CD4-positive, alpha-beta memory T cell (primary cell): ENCODE measurements at regions of chr11 and their contacts with region 1.

Region 1: DNA sequence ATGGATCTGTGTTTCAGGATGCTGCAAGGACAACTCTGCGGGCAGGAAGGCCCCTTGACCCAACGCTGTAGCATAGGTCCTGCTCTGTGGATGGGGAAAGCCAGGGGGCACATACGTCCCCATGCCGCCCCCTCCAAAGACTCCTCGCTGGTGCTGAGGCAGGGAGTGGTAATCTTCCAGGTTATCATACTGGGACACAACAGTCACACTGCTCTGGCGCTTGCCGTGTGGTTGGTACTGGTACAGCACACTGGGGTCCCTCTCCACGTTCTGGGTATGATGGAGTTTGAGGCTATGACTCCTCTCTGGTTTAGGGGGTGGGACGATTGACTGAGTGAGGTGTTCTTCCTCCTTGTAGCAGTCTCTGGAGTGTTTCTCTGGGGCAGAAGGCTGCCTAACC is 26.2 kb upstream of the TP53AIP1 start:
- DNase-seq: no peak
- H3K4me3 ChIP-seq: no peak overlapping the region
- H3K4me3 Mint-ChIP-seq: no peak overlapping the region
- H3K27ac ChIP-seq: no peak overlapping the region
- H3K27ac Mint-ChIP-seq: no peak overlapping the region
- H3K4me1 ChIP-seq: peaks cover 9% of the 10 kb centered on the region
- H3K4me1 Mint-ChIP-seq: peaks cover 9 to 30% (median 22%) of the 10 kb centered on the region in 4 donors
- H3K27me3 ChIP-seq: no peaks in the 10 kb centered on the region
- H3K27me3 Mint-ChIP-seq: peaks cover 0 to 5% of the 10 kb centered on the region in 2 donors

Region 2: DNA sequence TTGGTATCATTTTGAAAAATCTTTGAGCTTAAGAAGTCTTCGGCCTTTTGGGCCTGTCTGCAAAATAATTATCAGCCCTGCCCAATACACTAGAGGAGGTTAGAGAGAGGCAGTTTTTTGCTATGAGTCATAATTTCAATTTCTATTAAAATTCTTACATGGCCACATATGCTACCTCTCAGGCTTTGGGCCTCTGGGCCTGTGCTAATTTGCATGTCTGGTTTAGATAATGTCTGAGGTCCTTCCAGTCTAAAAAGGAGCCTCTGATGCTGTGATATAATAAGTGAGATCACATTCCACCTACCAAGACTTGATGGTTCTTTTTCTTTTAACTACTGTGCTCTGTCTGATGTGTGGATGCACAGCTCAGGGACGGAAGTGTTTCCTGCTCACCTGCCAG is 172.6 kb before region 1 on chr11:
- CTCF ChIA-PET with region 1: no interaction called
- POLR2A ChIA-PET with region 1: no interaction called
- intact Hi-C with region 1: no loop called
- DNase-seq: no peak
- H3K4me3 ChIP-seq: no peak overlapping the region
- H3K4me3 Mint-ChIP-seq: peak overlapping the region in 1 of 8 donors; percentile 29
- H3K27ac ChIP-seq: no peak overlapping the region
- H3K27ac Mint-ChIP-seq: peak overlapping the region; percentile 30 to 77 (median 52)
- H3K4me1 ChIP-seq: peaks cover 10% of the 10 kb centered on the region
- H3K4me1 Mint-ChIP-seq: peaks cover 15 to 60% (median 42%) of the 10 kb centered on the region in 4 donors
- H3K27me3 ChIP-seq: no peaks in the 10 kb centered on the region
- H3K27me3 Mint-ChIP-seq: no peaks in the 10 kb centered on the region

Region 3: DNA sequence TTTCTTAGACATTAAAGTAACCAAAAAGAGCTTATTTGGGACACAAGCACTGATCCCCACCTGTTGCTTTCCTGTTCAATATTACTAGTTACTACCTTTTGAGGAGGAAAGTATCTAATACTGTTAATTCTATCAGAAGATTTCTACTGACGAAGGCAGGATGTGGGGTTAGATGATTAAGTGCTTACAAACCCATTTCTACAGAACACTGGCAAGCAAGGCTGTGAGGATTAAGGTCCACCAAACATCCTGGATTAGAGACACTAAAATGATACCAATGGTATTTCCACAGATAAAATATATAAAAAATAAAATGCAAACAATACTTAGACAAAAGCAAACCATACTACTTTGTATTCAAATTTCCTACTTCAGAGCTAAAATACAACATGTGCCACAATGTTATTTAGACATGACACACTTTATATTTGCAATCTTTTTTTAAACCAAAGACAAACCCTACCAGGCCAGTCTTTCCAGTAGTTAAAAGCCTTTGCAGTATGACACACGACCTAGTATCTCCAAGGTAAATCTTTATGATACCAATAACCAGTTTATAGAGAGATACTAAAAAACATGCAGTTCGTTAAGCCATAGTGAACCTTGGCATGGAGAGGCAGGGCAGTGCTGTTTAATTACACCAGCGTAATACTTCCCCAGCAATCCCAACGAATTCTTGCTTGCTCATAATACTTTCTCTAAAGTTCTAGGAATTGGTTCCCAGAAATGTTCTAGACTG is 45.0 kb after region 1 on chr11:
- CTCF ChIA-PET with region 1: no interaction called
- POLR2A ChIA-PET with region 1: no interaction called
- intact Hi-C with region 1: loop called (anchors 1 kb)
- DNase-seq: no peak
- H3K4me3 ChIP-seq: no peak overlapping the region
- H3K4me3 Mint-ChIP-seq: no peak overlapping the region
- H3K27ac ChIP-seq: no peak overlapping the region
- H3K27ac Mint-ChIP-seq: no peak overlapping the region
- H3K4me1 ChIP-seq: no peaks in the 10 kb centered on the region
- H3K4me1 Mint-ChIP-seq: peaks cover 0 to 2% (median 0%) of the 10 kb centered on the region in 4 donors
- H3K27me3 ChIP-seq: no peaks in the 10 kb centered on the region
- H3K27me3 Mint-ChIP-seq: peaks cover 6 to 9% of the 10 kb centered on the region in 2 donors